ENCODE measurements at regions of chr5 and their contacts with region 1.

Region 1: DNA sequence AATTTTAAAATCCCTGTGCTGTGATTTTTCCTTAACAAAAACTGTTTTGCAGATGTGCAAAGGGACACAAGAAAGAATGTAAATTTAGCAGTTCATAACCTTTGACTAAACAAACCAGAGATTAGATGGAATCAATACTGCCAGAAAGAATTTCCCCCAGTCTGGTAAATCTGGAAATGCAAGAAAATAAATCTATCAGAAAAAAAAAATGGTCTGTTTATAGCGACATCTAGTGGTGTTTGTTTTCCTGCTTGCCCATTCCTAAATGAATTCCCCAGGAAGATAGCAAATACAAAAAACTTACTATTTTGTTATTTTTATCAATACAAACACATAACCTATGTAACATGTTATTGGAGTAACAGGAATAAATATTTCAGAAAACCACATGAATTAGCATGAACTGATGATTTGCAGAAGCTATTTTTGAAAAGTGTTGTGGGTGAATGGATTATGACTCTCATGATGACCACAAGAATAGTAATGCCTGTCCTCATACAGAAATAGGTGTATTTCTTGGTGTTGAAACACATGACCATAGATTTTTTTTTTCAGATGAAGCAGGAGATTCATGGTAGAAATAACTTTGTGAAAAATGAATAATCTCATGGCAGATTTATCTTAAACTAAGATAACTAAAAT is 1703.8 kb downstream of the MAT2B start:
- DNase-seq: no peak
- ATAC-seq: no peak
- H3K4me3 ChIP-seq: no peak overlapping the region
- H3K27ac ChIP-seq: no peak overlapping the region
- H3K4me1 ChIP-seq: no peaks in the 10 kb centered on the region
- H3K27me3 ChIP-seq: no peaks in the 10 kb centered on the region
- CTCF ChIP-seq: peak; percentile 50 to 53 (median 53); a peak in 5 of 6 replicates
- EP300 ChIP-seq: no peak
- POLR2A ChIP-seq: no peak
- RAD21 ChIP-seq: peak; percentile 60

Region 2: DNA sequence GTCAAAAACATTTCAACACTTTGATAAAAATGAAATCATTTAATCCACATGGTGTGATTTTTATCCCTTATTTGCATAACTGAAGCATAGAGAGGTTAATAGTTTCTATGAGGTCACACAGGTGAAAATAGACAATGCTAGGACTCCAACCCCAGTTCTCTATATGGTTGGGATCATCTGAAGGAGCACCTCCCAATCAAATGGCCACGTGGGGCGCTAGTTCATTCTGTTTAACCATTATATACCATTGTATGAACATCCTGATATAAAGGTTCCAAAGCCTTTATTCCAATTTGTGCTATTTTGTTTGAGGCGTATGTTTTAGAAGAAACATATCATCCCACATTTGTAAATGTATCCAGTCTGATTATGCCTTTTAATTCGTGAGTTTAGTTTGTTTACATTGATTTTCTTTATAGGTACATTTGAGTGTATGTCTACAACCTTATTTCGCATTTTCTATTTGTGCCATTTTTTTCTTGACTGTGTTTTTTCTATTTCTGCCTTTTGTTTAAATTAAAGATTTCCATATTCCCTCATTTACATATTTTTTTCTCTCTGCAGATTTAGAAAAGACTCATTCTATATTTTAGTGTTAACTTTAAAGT is 611.8 kb before region 1 on chr5:
- CTCF ChIA-PET with region 1: no interaction called
- POLR2A ChIA-PET with region 1: no interaction called
- RAD21 ChIA-PET with region 1: no interaction called
- SMC1A ChIA-PET with region 1: no interaction called
- in situ Hi-C with region 1: no loop called
- intact Hi-C with region 1: loop called (anchors 5 kb)
- DNase-seq: no peak
- ATAC-seq: peak; percentile 95
- H3K4me3 ChIP-seq: no peak overlapping the region
- H3K27ac ChIP-seq: no peak overlapping the region
- H3K4me1 ChIP-seq: no peaks in the 10 kb centered on the region
- H3K27me3 ChIP-seq: no peaks in the 10 kb centered on the region
- CTCF ChIP-seq: peak; percentile 47 to 54 (median 48)
- EP300 ChIP-seq: no peak
- POLR2A ChIP-seq: no peak
- RAD21 ChIP-seq: peak; percentile 43

Region 3: DNA sequence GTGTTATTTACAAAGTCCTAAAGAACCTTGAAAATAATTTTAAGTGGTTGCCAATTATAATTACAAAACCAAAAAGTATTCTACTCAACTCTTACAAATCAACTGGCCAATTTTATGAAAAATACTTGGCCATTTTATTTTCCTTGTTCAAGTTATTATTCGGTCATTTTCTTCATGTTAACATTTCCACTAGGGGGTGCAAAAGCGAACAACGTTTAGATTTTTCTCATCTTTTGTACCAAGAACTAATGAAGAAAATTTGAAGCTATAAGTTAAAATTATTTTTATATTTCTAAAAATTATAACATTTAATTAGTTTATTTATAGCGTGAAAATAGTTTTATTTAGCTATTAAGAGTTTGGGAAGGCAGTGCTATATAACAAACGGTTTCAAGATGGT is 250.5 kb before region 1 on chr5:
- CTCF ChIA-PET with region 1: interaction called, 8 read pairs
- POLR2A ChIA-PET with region 1: no interaction called
- RAD21 ChIA-PET with region 1: no interaction called
- SMC1A ChIA-PET with region 1: interaction called, 4 read pairs
- in situ Hi-C with region 1: no loop called
- intact Hi-C with region 1: loop called (anchors 5 kb)
- DNase-seq: no peak
- ATAC-seq: no peak
- H3K4me3 ChIP-seq: no peak overlapping the region
- H3K27ac ChIP-seq: no peak overlapping the region
- H3K4me1 ChIP-seq: no peaks in the 10 kb centered on the region
- H3K27me3 ChIP-seq: no peaks in the 10 kb centered on the region
- CTCF ChIP-seq: no peak
- EP300 ChIP-seq: no peak
- POLR2A ChIP-seq: no peak
- RAD21 ChIP-seq: no peak

Region 4: DNA sequence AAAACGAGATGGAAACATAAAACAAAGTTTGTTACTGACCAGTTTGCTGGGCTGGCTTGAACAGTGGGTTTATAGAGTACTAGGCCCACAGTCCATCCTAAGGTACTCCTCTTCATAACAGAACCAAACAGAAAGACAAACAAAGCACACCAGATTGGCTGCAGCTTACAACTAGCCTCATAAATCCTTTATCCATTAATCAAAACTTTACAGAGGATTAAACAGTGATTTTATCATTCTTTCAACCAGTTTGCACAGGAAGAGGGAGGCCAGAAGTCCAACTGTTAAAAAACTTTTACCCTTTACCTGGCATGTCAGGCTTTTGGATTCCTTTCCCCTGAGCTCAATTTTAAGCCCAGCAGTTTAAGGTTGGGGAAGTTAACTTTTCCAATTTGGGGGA is 236.2 kb before region 1 on chr5:
- CTCF ChIA-PET with region 1: interaction called, 4 read pairs
- POLR2A ChIA-PET with region 1: no interaction called
- RAD21 ChIA-PET with region 1: no interaction called
- SMC1A ChIA-PET with region 1: interaction called, 3 read pairs
- in situ Hi-C with region 1: no loop called
- intact Hi-C with region 1: loop called (anchors 5 kb)
- DNase-seq: no peak
- ATAC-seq: no peak
- H3K4me3 ChIP-seq: no peak overlapping the region
- H3K27ac ChIP-seq: no peak overlapping the region
- H3K4me1 ChIP-seq: no peaks in the 10 kb centered on the region
- H3K27me3 ChIP-seq: no peaks in the 10 kb centered on the region
- CTCF ChIP-seq: no peak
- EP300 ChIP-seq: no peak
- POLR2A ChIP-seq: no peak
- RAD21 ChIP-seq: no peak

Region 5: GRCh38 chr5:165029099-165029870 is 179.9 kb before region 1 on chr5:
- CTCF ChIA-PET with region 1: interaction called, 7 read pairs
- POLR2A ChIA-PET with region 1: no interaction called
- RAD21 ChIA-PET with region 1: interaction called, 4 read pairs
- SMC1A ChIA-PET with region 1: interaction called, 5 read pairs
- in situ Hi-C with region 1: no loop called
- intact Hi-C with region 1: loop called (anchors 2 kb)
- DNase-seq: no peak
- ATAC-seq: peak; percentile 92
- H3K4me3 ChIP-seq: no peak overlapping the region
- H3K27ac ChIP-seq: no peak overlapping the region
- H3K4me1 ChIP-seq: no peaks in the 10 kb centered on the region
- H3K27me3 ChIP-seq: no peaks in the 10 kb centered on the region
- CTCF ChIP-seq: peak in 2 of 3 experiments; percentile 22 to 50; a peak in 2 of 6 replicates
- EP300 ChIP-seq: no peak
- POLR2A ChIP-seq: no peak
- RAD21 ChIP-seq: peak; percentile 30; the same call in 1 of the 2 replicates